ENCODE measurements at regions of chr3 and their contacts with region 1.

Region 1: DNA sequence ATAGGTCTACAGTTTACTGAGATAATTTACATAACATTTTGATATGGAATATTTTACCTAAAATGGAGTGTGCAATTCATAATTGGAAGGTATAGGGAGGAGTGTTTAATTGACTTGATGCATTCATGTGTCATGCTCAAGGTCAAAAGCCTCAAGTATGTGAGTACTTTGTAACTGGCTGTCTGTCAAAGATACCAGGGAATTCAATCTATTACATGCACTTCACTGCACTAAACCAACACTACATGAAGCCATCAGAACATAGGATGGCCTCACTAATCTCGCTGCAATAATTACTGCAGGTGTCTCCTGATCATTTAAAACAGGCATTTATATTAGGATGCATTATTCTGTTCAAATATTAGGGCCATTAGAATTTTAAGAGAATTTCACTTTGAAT is 367.2 kb downstream of the CNTN4 start:
- DNase-seq: no peak
- ATAC-seq: peak in 5 of 8 donors; percentile 20 to 83 (median 74)
- H3K4me3 ChIP-seq: no peak overlapping the region
- H3K27ac ChIP-seq: no peak overlapping the region
- H3K4me1 ChIP-seq: peaks cover 0 to 17% (median 5%) of the 10 kb centered on the region in 9 donors
- H3K27me3 ChIP-seq: no peaks in the 10 kb centered on the region
- CTCF ChIP-seq: no peak

Region 2: GRCh38 chr3:2415083-2415482 is 50.8 kb before region 1 on chr3:
- intact Hi-C with region 1: no loop called
- DNase-seq: no peak
- ATAC-seq: no peak
- H3K4me3 ChIP-seq: no peak overlapping the region
- H3K27ac ChIP-seq: no peak overlapping the region
- H3K4me1 ChIP-seq: no peaks in the 10 kb centered on the region
- H3K27me3 ChIP-seq: no peaks in the 10 kb centered on the region
- CTCF ChIP-seq: no peak

Region 3: GRCh38 chr3:2656806-2657777 is 191.2 kb after region 1 on chr3:
- intact Hi-C with region 1: loop called in 1 of 10 experiments (anchors 5 kb)
- DNase-seq: no peak
- ATAC-seq: no peak
- H3K4me3 ChIP-seq: no peak overlapping the region
- H3K27ac ChIP-seq: no peak overlapping the region
- H3K4me1 ChIP-seq: peaks cover 0 to 22% (median 0%) of the 10 kb centered on the region in 9 donors
- H3K27me3 ChIP-seq: no peaks in the 10 kb centered on the region
- CTCF ChIP-seq: no peak

Measured in heart right ventricle (tissue), 16 donors.